Ovary (tissue), 10 donors: ENCODE measurements at regions of chr20 and their contacts with region 1.

Region 1: DNA sequence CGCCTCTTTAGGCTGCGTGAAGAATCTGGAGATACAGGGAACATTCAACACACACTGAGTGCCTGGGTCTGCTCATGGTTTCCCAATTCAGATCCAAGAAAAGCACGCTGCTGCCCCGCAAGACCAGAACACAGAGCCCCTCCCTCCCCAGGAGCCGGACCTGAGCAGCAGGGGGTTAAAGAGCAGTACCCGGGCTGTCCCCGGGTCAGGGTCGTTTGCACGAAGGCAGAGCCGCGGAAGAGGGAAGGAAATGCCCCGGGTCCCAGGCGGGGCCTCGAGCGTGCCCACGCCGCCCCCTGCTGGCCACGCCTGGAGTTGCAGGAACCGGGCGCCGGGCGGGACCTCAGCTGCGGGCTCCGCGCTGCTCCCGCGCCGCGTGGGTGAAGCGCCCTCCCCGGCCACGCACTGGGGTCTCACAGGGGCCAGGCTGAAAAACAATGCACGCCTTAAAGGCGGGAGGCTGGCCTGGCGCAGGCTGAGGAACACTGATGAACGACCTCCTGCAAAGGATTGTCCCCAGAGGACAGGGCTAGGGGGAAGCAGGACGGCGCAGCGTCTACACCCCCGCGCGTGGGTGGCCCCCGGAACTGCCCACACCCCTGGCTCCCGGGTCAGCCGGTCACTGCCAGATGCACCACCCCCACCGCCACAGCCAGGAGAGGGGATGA is 48.9 kb downstream of the ANKRD60 start:
- DNase-seq: peak; percentile 57 to 88 (median 69)
- H3K4me3 ChIP-seq: peak overlapping the region; percentile 12
- H3K27ac ChIP-seq: no peak overlapping the region
- H3K4me1 ChIP-seq: peaks cover 10% of the 10 kb centered on the region
- H3K27me3 ChIP-seq: no peaks in the 10 kb centered on the region
- CTCF ChIP-seq: peak; percentile 97 to 98 (median 97)
- EP300 ChIP-seq: no peak
- POLR2A ChIP-seq: no peak

Region 2: GRCh38 chr20:57654363-57654997 is 525.1 kb before region 1 on chr20:
- intact Hi-C with region 1: loop called (anchors 2 to 5 kb)
- DNase-seq: peak; percentile 41 to 73 (median 67)
- H3K4me3 ChIP-seq: no peak overlapping the region
- H3K27ac ChIP-seq: no peak overlapping the region
- H3K4me1 ChIP-seq: peaks cover 3% of the 10 kb centered on the region
- H3K27me3 ChIP-seq: no peaks in the 10 kb centered on the region
- CTCF ChIP-seq: peak; percentile 77 to 90 (median 87)
- EP300 ChIP-seq: no peak
- POLR2A ChIP-seq: no peak

Region 3: GRCh38 chr20:57991211-57991881 is 188.2 kb before region 1 on chr20:
- intact Hi-C with region 1: loop called in 1 of 4 experiments (anchors 10 kb)
- DNase-seq: no peak
- H3K4me3 ChIP-seq: no peak overlapping the region
- H3K27ac ChIP-seq: no peak overlapping the region
- H3K4me1 ChIP-seq: no peaks in the 10 kb centered on the region
- H3K27me3 ChIP-seq: no peaks in the 10 kb centered on the region
- CTCF ChIP-seq: no peak
- EP300 ChIP-seq: no peak
- POLR2A ChIP-seq: no peak

Region 4: GRCh38 chr20:58039274-58040092 is 140.1 kb before region 1 on chr20:
- intact Hi-C with region 1: no loop called
- DNase-seq: no peak
- H3K4me3 ChIP-seq: no peak overlapping the region
- H3K27ac ChIP-seq: no peak overlapping the region
- H3K4me1 ChIP-seq: no peaks in the 10 kb centered on the region
- H3K27me3 ChIP-seq: no peaks in the 10 kb centered on the region
- CTCF ChIP-seq: no peak
- EP300 ChIP-seq: no peak
- POLR2A ChIP-seq: no peak

Region 5: DNA sequence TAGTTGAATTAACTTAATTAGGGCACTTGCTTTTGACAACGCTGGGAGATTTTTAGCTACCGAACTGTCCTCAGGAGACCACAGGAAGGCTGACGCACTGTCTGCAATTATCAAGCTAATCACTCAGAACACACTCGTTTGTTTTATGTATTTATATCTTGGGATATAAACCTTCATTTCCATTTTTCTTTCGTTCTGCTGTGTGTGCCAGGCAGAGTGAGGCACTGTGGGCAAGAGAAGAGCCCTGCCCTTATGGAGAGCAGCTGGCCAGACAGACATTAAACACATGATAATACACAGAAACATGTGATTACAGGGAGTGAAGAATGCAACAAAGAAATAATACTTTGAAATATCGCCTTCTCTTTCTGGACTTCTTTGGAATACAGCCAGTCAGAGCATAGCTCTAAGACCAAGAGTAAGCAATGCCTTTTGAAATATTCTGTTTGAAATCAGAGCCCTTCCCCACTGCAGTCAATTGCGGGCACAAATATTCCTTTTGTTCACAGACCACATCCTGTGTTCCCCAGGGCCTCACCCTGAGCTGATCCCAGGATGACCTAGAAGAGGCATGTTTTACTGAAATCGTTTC is 47.9 kb before region 1 on chr20:
- intact Hi-C with region 1: loop called in 1 of 4 experiments (anchors 5 kb)
- DNase-seq: no peak
- H3K4me3 ChIP-seq: peak overlapping the region; percentile 18
- H3K27ac ChIP-seq: peak overlapping the region in 1 of 2 donors; percentile 50
- H3K4me1 ChIP-seq: peaks cover 18% of the 10 kb centered on the region
- H3K27me3 ChIP-seq: no peaks in the 10 kb centered on the region
- CTCF ChIP-seq: no peak
- EP300 ChIP-seq: no peak
- POLR2A ChIP-seq: no peak

Region 6: DNA sequence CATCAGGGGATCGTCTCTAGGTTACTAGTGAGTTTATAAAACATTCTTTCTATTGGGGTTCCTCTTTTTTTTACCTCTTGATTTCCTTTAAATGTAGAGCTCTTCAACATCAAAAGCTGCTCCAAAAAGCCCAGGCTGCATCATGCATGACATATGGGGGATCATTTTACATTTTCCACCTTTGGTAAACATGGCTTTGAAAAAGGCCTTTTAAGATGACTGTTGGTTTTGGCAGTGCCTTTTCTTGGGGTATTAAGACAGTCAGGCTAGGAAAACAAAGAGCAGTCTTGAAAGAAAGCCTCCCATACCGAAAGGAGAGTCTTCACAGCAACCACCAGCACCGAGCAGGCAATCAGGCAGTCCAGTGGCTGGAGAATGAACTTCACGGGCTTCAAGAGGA is 586.2 kb after region 1 on chr20:
- intact Hi-C with region 1: no loop called
- DNase-seq: no peak
- H3K4me3 ChIP-seq: no peak overlapping the region
- H3K27ac ChIP-seq: no peak overlapping the region
- H3K4me1 ChIP-seq: no peaks in the 10 kb centered on the region
- H3K27me3 ChIP-seq: no peaks in the 10 kb centered on the region
- CTCF ChIP-seq: no peak
- EP300 ChIP-seq: no peak
- POLR2A ChIP-seq: no peak

Region 7: GRCh38 chr20:59334651-59335300 is 1155.2 kb after region 1 on chr20:
- intact Hi-C with region 1: no loop called
- DNase-seq: no peak
- H3K4me3 ChIP-seq: no peak overlapping the region
- H3K27ac ChIP-seq: no peak overlapping the region
- H3K4me1 ChIP-seq: no peaks in the 10 kb centered on the region
- H3K27me3 ChIP-seq: no peaks in the 10 kb centered on the region
- CTCF ChIP-seq: no peak
- EP300 ChIP-seq: no peak
- POLR2A ChIP-seq: no peak